B cell (primary cell): ENCODE measurements at regions of chr1 and their contacts with region 1.

Region 1: DNA sequence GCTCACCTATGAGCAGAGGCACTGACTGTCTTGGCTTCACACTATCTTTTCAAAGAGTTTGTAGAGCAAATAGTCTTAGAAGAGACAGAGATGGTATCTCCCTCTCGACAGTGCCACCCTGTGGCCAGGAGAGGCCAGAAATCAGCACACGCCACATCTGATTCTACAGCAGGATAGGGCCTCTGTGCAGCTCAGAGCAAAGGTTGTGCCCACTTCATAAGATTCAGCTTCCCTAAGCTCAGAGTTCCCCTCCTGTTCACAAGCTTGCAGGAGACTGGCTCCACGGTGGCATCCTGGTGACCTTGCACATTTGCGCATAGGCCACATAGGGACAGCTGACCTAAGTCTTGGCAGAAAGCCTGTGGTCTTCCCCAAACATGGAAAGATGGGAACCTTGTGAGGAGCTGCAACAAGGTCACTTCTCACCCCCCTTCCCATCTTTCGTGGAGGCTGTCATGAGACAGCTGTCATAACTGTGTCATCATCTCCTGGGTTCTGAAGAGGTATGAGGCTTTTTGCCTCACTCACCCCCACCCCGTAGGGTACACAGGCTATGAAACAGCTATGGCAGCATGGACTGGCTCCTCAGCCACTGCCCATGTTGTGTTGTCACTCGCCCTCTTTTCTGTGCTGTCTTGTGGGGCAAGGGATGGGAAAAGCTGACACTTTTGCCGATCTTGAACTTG is 3.0 kb downstream of the ITLN2 start:
- DNase-seq: peak; percentile 81
- ATAC-seq: peak; percentile 81
- H3K4me3 ChIP-seq: no peak overlapping the region
- H3K4me3 Mint-ChIP-seq: no peak overlapping the region
- H3K27ac ChIP-seq: no peak overlapping the region
- H3K27ac Mint-ChIP-seq: no peak overlapping the region
- H3K4me1 ChIP-seq: peaks cover 0 to 4% of the 10 kb centered on the region in 2 donors
- H3K4me1 Mint-ChIP-seq: peaks cover 9% of the 10 kb centered on the region
- H3K27me3 ChIP-seq: no peaks in the 10 kb centered on the region
- H3K27me3 Mint-ChIP-seq: no peaks in the 10 kb centered on the region
- CTCF ChIP-seq: peak; percentile 85

Region 2: DNA sequence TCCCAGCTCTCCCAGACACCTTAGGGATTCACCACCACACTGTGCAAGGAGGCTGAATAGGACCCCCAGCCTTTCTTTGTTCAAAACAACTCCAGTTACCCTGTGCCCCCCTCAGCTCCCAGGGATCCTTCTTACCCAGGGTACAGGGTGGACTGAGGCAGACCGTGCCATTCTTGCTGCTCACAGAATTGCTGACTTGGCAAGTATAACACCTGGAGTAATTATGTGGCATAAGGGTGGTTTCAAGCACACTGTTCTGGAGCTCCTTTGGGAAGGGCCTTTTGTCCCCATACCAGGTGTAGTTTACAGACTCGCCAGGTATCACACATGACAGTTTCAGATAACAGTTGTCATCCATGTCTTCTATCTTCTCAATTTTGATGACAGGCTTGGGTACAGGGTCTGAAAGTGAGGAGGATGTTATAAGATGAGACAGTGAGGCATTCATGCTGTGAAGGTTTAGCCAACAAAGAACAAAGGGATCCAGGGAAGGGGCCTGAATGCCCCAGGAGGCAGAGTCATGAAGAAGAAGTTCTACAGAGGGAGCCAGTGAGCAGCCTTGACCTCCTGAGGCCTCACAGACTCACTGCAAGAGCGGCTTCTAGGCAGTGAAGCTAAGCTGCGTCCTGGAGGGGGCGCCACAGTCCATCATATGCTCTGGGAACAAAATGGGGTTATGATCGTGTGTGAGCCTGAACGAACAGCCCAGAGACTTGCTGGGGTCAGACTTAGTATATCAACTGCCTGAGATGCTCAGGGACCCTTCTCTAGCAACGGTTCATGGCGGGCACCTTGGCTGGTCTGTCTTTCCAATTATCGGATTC is 270.3 kb before region 1 on chr1:
- CTCF ChIA-PET with region 1: interaction called, 123 read pairs
- POLR2A ChIA-PET with region 1: no interaction called
- intact Hi-C with region 1: loop called (anchors 1 kb)
- DNase-seq: peak; percentile 89
- ATAC-seq: peak; percentile 93
- H3K4me3 ChIP-seq: no peak overlapping the region
- H3K4me3 Mint-ChIP-seq: no peak overlapping the region
- H3K27ac ChIP-seq: peak overlapping the region in 1 of 2 donors; percentile 82
- H3K27ac Mint-ChIP-seq: peak overlapping the region; percentile 72
- H3K4me1 ChIP-seq: peaks cover 38 to 45% of the 10 kb centered on the region in 2 donors
- H3K4me1 Mint-ChIP-seq: peaks cover 51% of the 10 kb centered on the region
- H3K27me3 ChIP-seq: no peaks in the 10 kb centered on the region
- H3K27me3 Mint-ChIP-seq: no peaks in the 10 kb centered on the region
- CTCF ChIP-seq: peak; percentile 92

Region 3: GRCh38 chr1:160726498-160727315 is 224.9 kb before region 1 on chr1:
- CTCF ChIA-PET with region 1: interaction called, 279 read pairs
- POLR2A ChIA-PET with region 1: no interaction called
- intact Hi-C with region 1: loop called (anchors 1 kb)
- DNase-seq: peak; percentile 88
- ATAC-seq: peak; percentile 93
- H3K4me3 ChIP-seq: peak overlapping the region in 1 of 5 experiments; percentile 17
- H3K4me3 Mint-ChIP-seq: no peak overlapping the region
- H3K27ac ChIP-seq: no peak overlapping the region
- H3K27ac Mint-ChIP-seq: no peak overlapping the region
- H3K4me1 ChIP-seq: peaks cover 8 to 12% of the 10 kb centered on the region in 2 donors
- H3K4me1 Mint-ChIP-seq: peaks cover 10% of the 10 kb centered on the region
- H3K27me3 ChIP-seq: no peaks in the 10 kb centered on the region
- H3K27me3 Mint-ChIP-seq: no peaks in the 10 kb centered on the region
- CTCF ChIP-seq: peak; percentile 99

Region 4: DNA sequence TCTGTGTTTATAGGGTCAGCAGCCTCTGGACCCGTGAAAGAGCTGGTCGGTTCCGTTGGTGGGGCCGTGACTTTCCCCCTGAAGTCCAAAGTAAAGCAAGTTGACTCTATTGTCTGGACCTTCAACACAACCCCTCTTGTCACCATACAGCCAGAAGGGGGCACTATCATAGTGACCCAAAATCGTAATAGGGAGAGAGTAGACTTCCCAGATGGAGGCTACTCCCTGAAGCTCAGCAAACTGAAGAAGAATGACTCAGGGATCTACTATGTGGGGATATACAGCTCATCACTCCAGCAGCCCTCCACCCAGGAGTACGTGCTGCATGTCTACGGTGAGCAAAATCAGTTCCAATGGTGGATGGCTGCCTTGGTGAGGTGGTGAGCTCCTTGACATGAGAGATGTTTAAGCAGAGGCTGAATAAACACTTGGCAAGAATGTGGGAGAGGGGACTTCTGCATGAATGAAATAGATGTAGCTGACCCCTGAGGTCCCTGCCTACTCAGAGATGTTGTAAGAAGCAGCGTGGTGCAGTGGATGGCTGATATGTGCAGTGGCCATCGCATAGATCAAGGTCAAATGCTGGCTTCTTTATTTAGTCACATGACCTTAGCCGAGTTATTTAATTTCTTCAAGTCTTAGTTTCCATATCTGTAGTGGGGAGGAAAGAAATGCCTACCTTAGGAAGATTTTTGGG is 203.3 kb before region 1 on chr1:
- CTCF ChIA-PET with region 1: interaction called, 45 read pairs
- POLR2A ChIA-PET with region 1: no interaction called
- intact Hi-C with region 1: no loop called
- DNase-seq: no peak
- ATAC-seq: no peak
- H3K4me3 ChIP-seq: no peak overlapping the region
- H3K4me3 Mint-ChIP-seq: no peak overlapping the region
- H3K27ac ChIP-seq: no peak overlapping the region
- H3K27ac Mint-ChIP-seq: no peak overlapping the region
- H3K4me1 ChIP-seq: peaks cover 8 to 11% of the 10 kb centered on the region in 2 donors
- H3K4me1 Mint-ChIP-seq: peaks cover 30% of the 10 kb centered on the region
- H3K27me3 ChIP-seq: no peaks in the 10 kb centered on the region
- H3K27me3 Mint-ChIP-seq: no peaks in the 10 kb centered on the region
- CTCF ChIP-seq: peak; percentile 30

Region 5: GRCh38 chr1:160795951-160796383 is 155.6 kb before region 1 on chr1 and contains the start of gene LY9:
- CTCF ChIA-PET with region 1: interaction called, 18 read pairs
- POLR2A ChIA-PET with region 1: no interaction called
- intact Hi-C with region 1: no loop called
- DNase-seq: peak; percentile 96
- ATAC-seq: peak; percentile 93
- H3K4me3 ChIP-seq: peak within 1 kb of the TSS; percentile 41 to 87 (median 63)
- H3K4me3 Mint-ChIP-seq: peak within 1 kb of the TSS; percentile 99
- H3K27ac ChIP-seq: peak within 1 kb of the TSS; percentile 95 to 98
- H3K27ac Mint-ChIP-seq: peak within 1 kb of the TSS; percentile 98
- H3K4me1 ChIP-seq: peaks cover 62 to 68% of the 10 kb centered on the region in 2 donors
- H3K4me1 Mint-ChIP-seq: peaks cover 68% of the 10 kb centered on the region
- H3K27me3 ChIP-seq: no peaks in the 10 kb centered on the region
- H3K27me3 Mint-ChIP-seq: no peaks in the 10 kb centered on the region
- CTCF ChIP-seq: no peak
- total RNA-seq, gene LY9: 365 and 367 TPM in 2 replicates

Region 6: GRCh38 chr1:160837558-160838205 is 113.9 kb before region 1 on chr1:
- CTCF ChIA-PET with region 1: interaction called, 111 read pairs
- POLR2A ChIA-PET with region 1: interaction called, 4 read pairs
- intact Hi-C with region 1: loop called (anchors 1 kb)
- DNase-seq: peak; percentile 91
- ATAC-seq: peak; percentile 97
- H3K4me3 ChIP-seq: peak overlapping the region in 1 of 5 experiments; percentile 30
- H3K4me3 Mint-ChIP-seq: peak overlapping the region; percentile 41
- H3K27ac ChIP-seq: peak overlapping the region; percentile 71 to 72
- H3K27ac Mint-ChIP-seq: peak overlapping the region; percentile 90
- H3K4me1 ChIP-seq: peaks cover 33 to 34% of the 10 kb centered on the region in 2 donors
- H3K4me1 Mint-ChIP-seq: peaks cover 41% of the 10 kb centered on the region
- H3K27me3 ChIP-seq: no peaks in the 10 kb centered on the region
- H3K27me3 Mint-ChIP-seq: no peaks in the 10 kb centered on the region
- CTCF ChIP-seq: peak; percentile 65

Region 7: GRCh38 chr1:161177112-161177935 is 225.7 kb after region 1 on chr1 and contains the start of gene B4GALT3:
- CTCF ChIA-PET with region 1: no interaction called
- POLR2A ChIA-PET with region 1: no interaction called
- intact Hi-C with region 1: no loop called
- DNase-seq: peak; percentile 92
- ATAC-seq: peak; percentile 92
- H3K4me3 ChIP-seq: peak within 1 kb of the TSS; percentile 75 to 95 (median 90)
- H3K4me3 Mint-ChIP-seq: peak within 1 kb of the TSS; percentile 99
- H3K27ac ChIP-seq: peak within 1 kb of the TSS; percentile 76 to 81
- H3K27ac Mint-ChIP-seq: peak within 1 kb of the TSS; percentile 100
- H3K4me1 ChIP-seq: peaks cover 36 to 52% of the 10 kb centered on the region in 2 donors
- H3K4me1 Mint-ChIP-seq: peaks cover 64% of the 10 kb centered on the region
- H3K27me3 ChIP-seq: no peaks in the 10 kb centered on the region
- H3K27me3 Mint-ChIP-seq: no peaks in the 10 kb centered on the region
- CTCF ChIP-seq: no peak
- total RNA-seq, gene B4GALT3: 37.6 and 42.9 TPM in 2 replicates